MCF 10A (cell line): ENCODE measurements at regions of chr2 and their contacts with region 1.

Region 1: GRCh38 chr2:175282290-175282689 is 100.8 kb upstream of the ATP5MC3 start:
- DNase-seq: peak; percentile 47
- H3K4me3 Mint-ChIP-seq: no peak overlapping the region
- H3K27ac Mint-ChIP-seq: no peak overlapping the region
- H3K4me1 Mint-ChIP-seq: no peaks in the 10 kb centered on the region
- H3K27me3 Mint-ChIP-seq: peaks cover 64% of the 10 kb centered on the region
- CTCF ChIP-seq: peak; percentile 46

Region 2: DNA sequence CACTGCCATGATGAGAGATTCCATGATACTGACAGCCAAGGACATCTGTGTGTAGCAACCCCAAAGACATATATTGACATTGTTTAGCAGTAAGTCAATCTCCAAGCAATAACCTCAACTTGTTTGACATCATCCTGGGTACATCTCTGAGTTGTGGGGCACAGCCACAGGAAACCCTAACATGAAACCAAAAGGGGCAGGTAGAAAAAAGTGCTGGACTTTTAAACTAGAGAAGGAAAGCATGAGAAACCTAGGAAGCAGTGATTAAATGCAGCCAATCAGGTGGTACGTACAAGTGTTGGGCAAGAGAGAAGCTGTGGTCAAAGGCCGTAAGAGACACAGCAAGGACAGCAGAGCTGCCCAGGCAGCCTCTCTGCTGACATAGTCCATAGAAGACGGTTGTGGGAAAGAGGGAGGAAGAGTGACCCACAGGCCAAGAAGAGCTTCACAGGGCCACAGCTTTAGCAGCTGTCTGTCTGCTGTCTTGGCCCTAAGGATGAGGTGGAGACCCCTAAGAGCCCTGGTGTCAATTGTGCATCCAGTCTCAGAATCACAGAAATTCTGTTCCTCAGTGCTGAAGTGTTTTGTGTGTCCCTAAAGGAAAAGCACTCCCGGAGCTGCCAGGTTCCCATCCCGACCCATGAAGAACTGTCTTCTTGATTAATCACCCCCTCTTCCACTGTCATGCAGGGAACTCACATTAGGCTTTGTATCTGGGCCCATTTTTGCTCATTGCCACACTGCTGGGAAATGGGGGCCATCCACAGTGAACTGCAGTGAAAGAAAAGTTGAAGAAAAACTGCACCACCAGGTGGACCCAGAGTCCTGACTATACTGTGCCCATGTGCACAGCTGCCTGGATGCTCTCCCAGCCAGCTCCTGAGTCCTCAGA is 251.7 kb before region 1 on chr2:
- CTCF ChIA-PET with region 1: interaction called, 6 read pairs
- POLR2A ChIA-PET with region 1: no interaction called
- intact Hi-C with region 1: loop called (anchors 1 kb)
- DNase-seq: peak; percentile 49
- H3K4me3 Mint-ChIP-seq: no peak overlapping the region
- H3K27ac Mint-ChIP-seq: no peak overlapping the region
- H3K4me1 Mint-ChIP-seq: no peaks in the 10 kb centered on the region
- H3K27me3 Mint-ChIP-seq: no peaks in the 10 kb centered on the region
- CTCF ChIP-seq: peak; percentile 28

Region 3: DNA sequence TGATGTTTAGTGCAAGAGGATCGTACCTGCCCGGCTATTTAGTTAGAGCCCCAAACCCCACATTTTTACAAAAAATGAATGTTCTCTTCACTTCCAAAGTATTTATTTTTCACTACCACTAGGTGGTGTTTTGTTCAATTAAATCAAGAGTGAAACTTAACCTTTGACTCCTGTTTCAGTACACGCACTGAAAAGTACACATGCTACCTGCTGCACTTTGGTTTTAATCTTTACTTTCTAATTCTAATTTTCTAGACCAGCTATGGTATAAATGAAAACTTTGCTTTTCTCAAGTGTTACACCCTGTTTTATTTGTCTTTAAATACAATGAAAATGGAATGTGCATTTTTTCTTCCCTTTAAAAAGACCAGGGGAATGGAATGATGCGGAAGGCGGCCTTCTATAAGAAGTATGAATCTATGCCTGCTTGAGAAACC is 245.7 kb before region 1 on chr2:
- CTCF ChIA-PET with region 1: no interaction called
- POLR2A ChIA-PET with region 1: no interaction called
- intact Hi-C with region 1: loop called (anchors 1 kb)
- DNase-seq: peak; percentile 45
- H3K4me3 Mint-ChIP-seq: no peak overlapping the region
- H3K27ac Mint-ChIP-seq: no peak overlapping the region
- H3K4me1 Mint-ChIP-seq: no peaks in the 10 kb centered on the region
- H3K27me3 Mint-ChIP-seq: no peaks in the 10 kb centered on the region
- CTCF ChIP-seq: peak; percentile 51

Region 4: DNA sequence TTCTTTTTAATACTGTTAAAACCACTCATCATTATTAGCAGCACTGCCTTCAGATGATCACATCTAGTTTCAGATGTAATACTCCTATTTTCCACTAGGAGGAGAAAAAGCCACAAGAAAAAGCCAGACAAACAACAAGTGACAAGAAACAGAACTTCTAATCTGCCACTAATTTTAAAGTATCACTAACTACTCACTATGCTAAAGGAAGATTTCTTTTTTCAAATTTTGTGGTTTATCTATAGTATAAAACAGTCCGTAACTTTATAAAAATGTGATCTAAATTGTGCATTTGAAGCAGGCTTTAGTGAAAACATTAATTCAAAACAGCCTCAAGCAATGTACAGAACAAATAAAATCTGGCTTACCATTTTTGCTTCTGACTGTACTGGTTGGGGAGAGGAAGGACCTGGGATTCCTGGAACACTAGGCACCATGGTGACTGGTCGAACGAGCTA is 171.1 kb before region 1 on chr2:
- CTCF ChIA-PET with region 1: interaction called, 3 read pairs
- POLR2A ChIA-PET with region 1: no interaction called
- intact Hi-C with region 1: loop called (anchors 1 kb)
- DNase-seq: peak; percentile 57
- H3K4me3 Mint-ChIP-seq: no peak overlapping the region
- H3K27ac Mint-ChIP-seq: no peak overlapping the region
- H3K4me1 Mint-ChIP-seq: no peaks in the 10 kb centered on the region
- H3K27me3 Mint-ChIP-seq: no peaks in the 10 kb centered on the region
- CTCF ChIP-seq: peak; percentile 58

Region 5: DNA sequence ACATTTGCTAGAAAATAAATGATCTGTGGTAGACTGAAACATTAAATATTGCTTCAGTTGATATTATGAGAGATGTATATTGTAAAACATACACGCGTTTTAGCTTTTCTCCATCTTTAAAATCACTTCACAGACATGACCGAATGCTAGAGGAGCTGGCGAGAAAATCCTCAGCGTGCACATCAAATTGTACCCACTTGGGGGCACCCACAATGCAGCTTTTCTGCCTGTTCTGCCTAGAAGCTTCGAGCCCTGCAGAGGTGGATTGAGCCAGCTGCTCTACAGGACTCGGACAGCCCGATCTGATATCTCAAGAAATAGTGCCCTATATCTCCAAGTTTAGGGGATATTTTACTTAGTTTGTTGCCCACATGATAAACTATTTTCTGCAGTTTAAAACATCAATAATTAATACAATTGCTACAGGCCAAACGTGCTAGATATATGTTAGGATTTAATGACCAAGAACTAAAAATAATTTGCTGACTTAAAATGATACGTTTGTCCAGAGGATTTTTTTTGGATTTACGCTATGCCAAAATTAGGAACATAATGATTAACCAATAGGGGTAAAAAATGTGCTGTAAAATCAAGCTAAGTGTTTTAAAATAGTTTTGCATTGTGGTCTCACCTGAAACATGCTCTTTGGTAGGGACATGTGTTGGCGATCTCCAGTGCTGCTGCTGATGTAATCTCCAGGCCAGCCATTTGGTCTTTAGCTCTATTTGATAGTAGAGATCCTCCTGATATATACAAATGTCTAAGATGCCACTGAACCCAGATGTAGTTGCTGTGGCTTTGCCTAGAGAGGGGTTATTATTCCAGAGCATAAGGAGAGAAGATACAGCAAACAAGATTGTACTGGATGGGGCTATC is 78.4 kb before region 1 on chr2:
- CTCF ChIA-PET with region 1: interaction called, 38 read pairs
- POLR2A ChIA-PET with region 1: interaction called, 3 read pairs
- intact Hi-C with region 1: loop called (anchors 1 kb)
- DNase-seq: peak; percentile 75
- H3K4me3 Mint-ChIP-seq: no peak overlapping the region
- H3K27ac Mint-ChIP-seq: no peak overlapping the region
- H3K4me1 Mint-ChIP-seq: no peaks in the 10 kb centered on the region
- H3K27me3 Mint-ChIP-seq: peaks cover 34% of the 10 kb centered on the region
- CTCF ChIP-seq: peak; percentile 48

Region 6: GRCh38 chr2:175251425-175252041 is 30.8 kb before region 1 on chr2:
- CTCF ChIA-PET with region 1: interaction called, 64 read pairs
- POLR2A ChIA-PET with region 1: no interaction called
- intact Hi-C with region 1: loop called (anchors 1 kb)
- DNase-seq: peak; percentile 63
- H3K4me3 Mint-ChIP-seq: no peak overlapping the region
- H3K27ac Mint-ChIP-seq: no peak overlapping the region
- H3K4me1 Mint-ChIP-seq: no peaks in the 10 kb centered on the region
- H3K27me3 Mint-ChIP-seq: peaks cover 56% of the 10 kb centered on the region
- CTCF ChIP-seq: peak; percentile 48

Region 7: GRCh38 chr2:175353275-175353674 is 71.0 kb after region 1 on chr2:
- CTCF ChIA-PET with region 1: no interaction called
- POLR2A ChIA-PET with region 1: no interaction called
- intact Hi-C with region 1: no loop called
- DNase-seq: no peak
- H3K4me3 Mint-ChIP-seq: no peak overlapping the region
- H3K27ac Mint-ChIP-seq: no peak overlapping the region
- H3K4me1 Mint-ChIP-seq: no peaks in the 10 kb centered on the region
- H3K27me3 Mint-ChIP-seq: peaks cover 64% of the 10 kb centered on the region
- CTCF ChIP-seq: no peak